Calu3 (cell line): ENCODE measurements at regions of chr3 and their contacts with region 1.

Region 1: GRCh38 chr3:87167628-87168456 is 59.3 kb upstream of the CHMP2B start:
- DNase-seq: peak; percentile 36
- H3K4me3 Mint-ChIP-seq: peak overlapping the region; percentile 50
- H3K27ac Mint-ChIP-seq: no peak overlapping the region
- H3K4me1 Mint-ChIP-seq: no peaks in the 10 kb centered on the region
- H3K27me3 Mint-ChIP-seq: no peaks in the 10 kb centered on the region
- CTCF ChIP-seq: peak; percentile 18

Region 2: DNA sequence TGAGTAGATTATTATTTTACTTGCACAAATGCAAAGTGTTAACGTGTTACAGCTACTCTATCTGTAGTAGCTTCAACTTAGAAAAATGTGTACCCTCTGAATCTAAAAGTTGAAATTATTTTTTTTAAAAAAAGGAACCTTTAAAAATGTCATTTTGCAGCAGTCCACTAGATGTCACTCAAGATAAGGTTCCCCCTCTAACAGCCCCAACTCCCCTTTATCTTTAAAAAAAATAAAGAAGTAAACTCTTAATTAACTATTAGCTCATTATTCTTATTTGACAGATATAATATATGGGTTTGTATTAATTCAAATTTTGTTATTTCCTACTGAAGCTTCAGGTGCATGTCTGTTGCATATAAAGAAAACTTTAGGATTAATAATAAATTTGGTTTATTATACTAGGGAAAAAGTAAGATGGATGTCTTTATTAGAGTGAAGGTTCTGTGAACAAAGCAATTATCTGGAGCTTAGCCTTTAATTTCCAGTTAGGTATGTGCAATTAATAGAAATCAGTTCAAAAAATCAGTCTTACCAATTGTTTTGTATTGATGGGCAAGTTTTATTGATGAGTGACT is 465.4 kb before region 1 on chr3:
- CTCF ChIA-PET with region 1: no interaction called
- intact Hi-C with region 1: loop called (anchors 5 kb)
- DNase-seq: no peak
- H3K4me3 Mint-ChIP-seq: no peak overlapping the region
- H3K27ac Mint-ChIP-seq: no peak overlapping the region
- H3K4me1 Mint-ChIP-seq: no peaks in the 10 kb centered on the region
- H3K27me3 Mint-ChIP-seq: peaks cover 27% of the 10 kb centered on the region
- CTCF ChIP-seq: peak; percentile 34

Region 3: DNA sequence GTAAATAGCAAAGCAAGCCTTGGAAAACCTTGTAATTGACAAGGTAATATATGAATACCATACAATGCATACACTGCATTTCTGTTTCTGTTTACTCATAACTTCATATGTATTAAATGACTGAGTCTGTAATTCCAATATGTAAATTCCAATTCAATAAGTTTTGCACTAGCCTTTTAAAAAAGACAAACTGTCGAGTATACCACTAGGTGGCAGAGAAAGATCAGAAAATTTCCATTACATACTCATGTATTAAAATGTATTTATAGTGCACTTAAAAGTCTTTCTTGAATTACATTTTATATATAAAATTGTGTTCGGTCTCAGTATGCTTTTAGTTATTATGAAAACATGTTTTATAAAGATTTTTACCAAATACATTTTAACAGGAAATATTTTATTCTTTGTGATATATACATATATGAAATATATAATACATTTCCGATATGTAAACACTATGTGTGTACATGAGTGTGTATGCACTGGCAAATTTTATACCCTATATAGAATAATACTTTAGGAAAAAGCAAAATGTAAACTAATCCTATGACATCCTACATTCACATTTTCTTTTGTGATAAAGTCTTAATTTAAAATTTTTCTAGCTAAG is 393.7 kb before region 1 on chr3:
- CTCF ChIA-PET with region 1: interaction called, 5 read pairs
- intact Hi-C with region 1: loop called (anchors 1 kb)
- DNase-seq: no peak
- H3K4me3 Mint-ChIP-seq: no peak overlapping the region
- H3K27ac Mint-ChIP-seq: no peak overlapping the region
- H3K4me1 Mint-ChIP-seq: no peaks in the 10 kb centered on the region
- H3K27me3 Mint-ChIP-seq: no peaks in the 10 kb centered on the region
- CTCF ChIP-seq: no peak

Region 4: GRCh38 chr3:87006844-87007439 is 160.9 kb before region 1 on chr3:
- CTCF ChIA-PET with region 1: interaction called, 3 read pairs
- intact Hi-C with region 1: loop called (anchors 5 kb)
- DNase-seq: no peak
- H3K4me3 Mint-ChIP-seq: no peak overlapping the region
- H3K27ac Mint-ChIP-seq: no peak overlapping the region
- H3K4me1 Mint-ChIP-seq: peaks cover 8% of the 10 kb centered on the region
- H3K27me3 Mint-ChIP-seq: no peaks in the 10 kb centered on the region
- CTCF ChIP-seq: no peak

Region 5: DNA sequence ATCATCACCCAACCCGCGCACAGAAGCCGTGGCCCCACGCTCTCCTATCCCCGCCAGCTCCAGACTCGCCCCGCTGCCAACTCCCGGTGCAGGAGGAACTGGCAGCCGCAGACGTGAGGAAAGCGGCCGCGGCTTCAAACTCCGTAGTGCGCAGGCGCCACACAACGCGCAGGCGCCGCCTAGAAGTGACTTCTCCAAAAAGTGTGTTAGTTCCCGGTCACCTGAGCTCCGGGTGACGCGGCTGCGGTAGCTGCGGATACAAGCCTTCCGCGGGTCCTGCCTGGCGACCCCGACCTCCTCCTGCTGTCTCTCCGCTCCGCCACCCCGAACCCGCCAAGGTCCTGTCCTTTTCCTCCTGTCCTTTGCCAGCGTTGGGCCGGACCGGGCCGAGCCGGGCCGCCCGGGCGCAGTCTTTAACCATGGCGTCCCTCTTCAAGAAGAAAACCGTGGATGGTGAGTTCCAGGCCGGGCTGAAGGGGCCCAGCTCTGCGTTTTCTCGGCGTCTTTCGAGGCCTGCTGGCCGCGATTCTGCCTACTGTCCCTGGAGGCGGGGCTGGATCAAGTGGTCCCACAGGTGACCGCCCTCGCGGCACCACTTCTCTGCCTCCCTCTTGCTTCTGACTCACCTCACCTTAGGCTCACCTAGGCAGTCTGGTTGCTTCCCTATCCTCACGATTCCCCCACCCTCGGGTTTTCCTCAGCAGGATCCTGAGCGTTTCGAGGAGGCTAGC is 59.4 kb after region 1 on chr3 and contains the start of gene CHMP2B:
- CTCF ChIA-PET with region 1: no interaction called
- intact Hi-C with region 1: no loop called
- DNase-seq: peak; percentile 88
- H3K4me3 Mint-ChIP-seq: peak within 1 kb of the TSS; percentile 96
- H3K27ac Mint-ChIP-seq: peak within 1 kb of the TSS; percentile 92
- H3K4me1 Mint-ChIP-seq: peaks cover 19% of the 10 kb centered on the region
- H3K27me3 Mint-ChIP-seq: no peaks in the 10 kb centered on the region
- CTCF ChIP-seq: no peak
- total RNA-seq, gene CHMP2B: 56.6 and 58.8 TPM in 2 replicates